ENCODE measurements at regions of chr2 and their contacts with region 1.

Region 1: DNA sequence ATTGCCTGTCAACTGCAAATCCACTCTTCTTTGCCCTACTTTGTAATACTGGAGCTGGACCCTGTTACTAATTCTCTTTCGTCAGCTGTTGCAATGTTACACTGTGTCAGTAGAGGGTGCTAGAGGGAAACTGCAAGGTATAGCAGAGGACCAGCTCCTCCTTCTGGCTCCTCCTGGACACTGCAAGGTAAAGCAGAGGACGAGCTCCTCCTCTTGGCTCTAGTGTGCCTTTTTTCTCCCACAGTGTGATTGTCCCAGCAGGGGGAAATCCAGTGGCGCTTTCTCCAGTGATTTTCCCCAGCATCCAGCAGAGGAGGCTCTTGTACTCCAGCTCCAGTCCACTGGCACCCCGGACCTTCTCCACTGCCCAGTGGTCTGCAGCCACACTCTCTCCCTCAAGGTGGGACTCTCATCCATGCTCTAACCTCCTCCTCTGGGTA is 95.6 kb downstream of the CAPN13 start:
- DNase-seq: peak; percentile 59
- ATAC-seq: peak; percentile 72
- H3K4me3 ChIP-seq: no peak overlapping the region
- H3K27ac ChIP-seq: no peak overlapping the region
- H3K4me1 ChIP-seq: peaks cover 13% of the 10 kb centered on the region
- H3K27me3 ChIP-seq: no peaks in the 10 kb centered on the region
- CTCF ChIP-seq: peak; percentile 100; a peak in 5 of 6 replicates
- EP300 ChIP-seq: no peak
- POLR2A ChIP-seq: no peak
- RAD21 ChIP-seq: peak; percentile 96

Region 2: DNA sequence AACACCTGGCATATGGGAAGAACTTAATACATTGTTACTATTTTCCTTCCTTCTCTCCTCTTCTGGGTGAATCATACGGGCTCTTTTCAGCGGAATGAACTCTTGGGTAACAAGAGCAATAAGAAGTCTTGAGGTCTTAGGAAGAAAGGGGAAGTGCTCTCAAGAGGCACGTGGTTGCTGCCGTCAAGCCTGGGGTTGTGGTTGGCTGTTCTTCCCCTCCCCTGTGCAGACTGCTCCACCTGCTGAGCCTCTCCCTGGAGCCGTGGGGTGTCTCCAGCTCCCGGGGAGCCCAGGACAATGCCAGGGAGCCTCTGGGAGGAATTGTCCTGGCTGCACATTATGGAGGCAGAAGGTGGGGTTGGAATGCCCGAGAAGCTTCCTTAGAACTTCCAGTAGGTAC is 1711.2 kb before region 1 on chr2:
- CTCF ChIA-PET with region 1: no interaction called
- POLR2A ChIA-PET with region 1: no interaction called
- RAD21 ChIA-PET with region 1: no interaction called
- SMC1A ChIA-PET with region 1: no interaction called
- in situ Hi-C with region 1: no loop called
- intact Hi-C with region 1: no loop called
- DNase-seq: peak; percentile 31
- ATAC-seq: peak; percentile 99
- H3K4me3 ChIP-seq: no peak overlapping the region
- H3K27ac ChIP-seq: no peak overlapping the region
- H3K4me1 ChIP-seq: peaks cover 3% of the 10 kb centered on the region; the same call in 1 of the 2 replicates
- H3K27me3 ChIP-seq: no peaks in the 10 kb centered on the region
- CTCF ChIP-seq: 0 out of 6 replicates have a peak, but pooled peaks of 1 of the 3 experiments have one; percentile 11
- EP300 ChIP-seq: peak; percentile 39 to 71; a peak in 3 of 4 replicates
- POLR2A ChIP-seq: no peak
- RAD21 ChIP-seq: no peak

Region 3: DNA sequence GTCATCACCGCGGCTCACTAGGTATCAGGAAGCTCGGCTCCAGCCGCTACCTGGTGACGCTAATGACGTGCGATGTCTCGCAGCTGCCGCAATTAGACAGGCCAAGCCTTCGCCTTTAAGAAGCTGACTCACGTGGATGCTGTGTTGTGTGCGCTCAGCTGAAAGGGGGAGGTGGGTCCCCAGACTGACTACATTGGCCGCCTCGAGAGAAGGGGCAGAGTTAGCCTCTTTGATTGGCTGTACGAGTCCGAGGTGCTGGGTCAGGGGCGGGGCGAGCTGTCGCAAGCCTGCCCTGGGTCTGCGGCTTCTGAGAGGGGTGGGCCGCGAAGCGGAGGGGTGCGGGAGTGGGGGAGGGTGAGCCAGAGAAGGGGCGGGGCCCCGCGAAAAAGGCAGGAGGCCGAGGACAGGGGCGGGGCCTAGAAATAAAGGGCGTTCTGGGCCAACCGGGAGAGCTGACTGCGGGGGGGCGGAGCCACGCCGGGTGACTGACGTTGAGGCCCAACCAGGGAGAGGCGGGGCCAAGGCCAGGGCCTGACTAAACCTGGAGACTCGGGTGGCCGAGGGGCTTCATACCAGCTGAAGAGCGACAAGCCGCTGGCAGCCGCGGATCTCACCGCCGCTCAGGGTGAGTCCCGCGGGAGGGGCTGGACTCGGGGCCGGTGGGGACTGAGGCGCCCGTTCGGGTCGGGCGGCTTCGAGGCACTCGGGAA is 565.1 kb before region 1 on chr2 and contains the start of gene YPEL5:
- CTCF ChIA-PET with region 1: interaction called, 86 read pairs
- POLR2A ChIA-PET with region 1: no interaction called
- RAD21 ChIA-PET with region 1: interaction called, 31 read pairs
- SMC1A ChIA-PET with region 1: interaction called, 32 read pairs
- in situ Hi-C with region 1: no loop called
- intact Hi-C with region 1: no loop called
- DNase-seq: peak; percentile 97
- ATAC-seq: peak; percentile 96
- H3K4me3 ChIP-seq: peak within 1 kb of the TSS; percentile 78
- H3K27ac ChIP-seq: peak within 1 kb of the TSS; percentile 83
- H3K4me1 ChIP-seq: peaks cover 25% of the 10 kb centered on the region
- H3K27me3 ChIP-seq: no peaks in the 10 kb centered on the region
- CTCF ChIP-seq: no peak
- EP300 ChIP-seq: peak in 1 of 2 experiments; percentile 78; a peak in 1 of 4 replicates
- POLR2A ChIP-seq: peak; percentile 82
- RAD21 ChIP-seq: no peak
- polyA plus RNA-seq, gene YPEL5: 24.9 to 43.6 TPM

Region 4: DNA sequence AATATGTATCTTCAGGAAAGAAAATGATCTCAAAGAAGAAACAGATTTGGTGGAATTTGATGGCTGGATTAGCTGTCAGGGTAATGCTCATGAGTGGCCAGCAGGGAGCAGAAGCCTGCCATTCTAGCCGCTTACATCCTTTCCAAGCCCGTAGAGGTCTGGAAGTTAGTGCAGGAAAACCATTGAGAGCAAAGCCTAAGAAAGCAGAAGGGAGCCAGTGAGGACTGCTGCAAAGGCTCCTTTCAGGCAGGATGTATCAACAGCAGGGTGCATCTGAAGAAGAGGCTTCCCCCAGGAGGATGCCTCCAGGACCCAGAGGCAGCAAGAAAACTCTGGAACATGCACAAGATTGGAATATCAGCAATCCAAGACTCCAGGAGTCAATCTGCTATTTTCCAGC is 503.2 kb before region 1 on chr2:
- CTCF ChIA-PET with region 1: interaction called, 334 read pairs
- POLR2A ChIA-PET with region 1: interaction called, 5 read pairs
- RAD21 ChIA-PET with region 1: interaction called, 195 read pairs
- SMC1A ChIA-PET with region 1: interaction called, 137 read pairs
- in situ Hi-C with region 1: loop called (anchors 5 kb)
- intact Hi-C with region 1: loop called (anchors 1 kb)
- DNase-seq: no peak
- ATAC-seq: peak; percentile 82
- H3K4me3 ChIP-seq: no peak overlapping the region
- H3K27ac ChIP-seq: no peak overlapping the region
- H3K4me1 ChIP-seq: peaks cover 2% of the 10 kb centered on the region
- H3K27me3 ChIP-seq: no peaks in the 10 kb centered on the region; a peak in 1 of 4 replicates
- CTCF ChIP-seq: peak; percentile 84 to 90 (median 88)
- EP300 ChIP-seq: no peak
- POLR2A ChIP-seq: no peak
- RAD21 ChIP-seq: peak; percentile 94

Region 5: GRCh38 chr2:30447149-30448045 is 264.3 kb before region 1 on chr2 and contains the start of gene LCLAT1:
- CTCF ChIA-PET with region 1: interaction called, 6 read pairs
- POLR2A ChIA-PET with region 1: no interaction called
- RAD21 ChIA-PET with region 1: interaction called, 5 read pairs
- SMC1A ChIA-PET with region 1: interaction called, 4 read pairs
- in situ Hi-C with region 1: loop called (anchors 5 kb)
- intact Hi-C with region 1: no loop called
- DNase-seq: peak; percentile 44
- ATAC-seq: peak; percentile 95
- H3K4me3 ChIP-seq: peak within 1 kb of the TSS; percentile 93
- H3K27ac ChIP-seq: peak within 1 kb of the TSS; percentile 77
- H3K4me1 ChIP-seq: no peaks in the 10 kb centered on the region; the same call in 1 of the 2 replicates
- H3K27me3 ChIP-seq: no peaks in the 10 kb centered on the region
- CTCF ChIP-seq: no peak; a peak in 1 of 6 replicates
- EP300 ChIP-seq: no peak
- POLR2A ChIP-seq: peak; percentile 84
- RAD21 ChIP-seq: no peak
- polyA plus RNA-seq, gene LCLAT1: 8.1 to 33.0 TPM

Region 6: DNA sequence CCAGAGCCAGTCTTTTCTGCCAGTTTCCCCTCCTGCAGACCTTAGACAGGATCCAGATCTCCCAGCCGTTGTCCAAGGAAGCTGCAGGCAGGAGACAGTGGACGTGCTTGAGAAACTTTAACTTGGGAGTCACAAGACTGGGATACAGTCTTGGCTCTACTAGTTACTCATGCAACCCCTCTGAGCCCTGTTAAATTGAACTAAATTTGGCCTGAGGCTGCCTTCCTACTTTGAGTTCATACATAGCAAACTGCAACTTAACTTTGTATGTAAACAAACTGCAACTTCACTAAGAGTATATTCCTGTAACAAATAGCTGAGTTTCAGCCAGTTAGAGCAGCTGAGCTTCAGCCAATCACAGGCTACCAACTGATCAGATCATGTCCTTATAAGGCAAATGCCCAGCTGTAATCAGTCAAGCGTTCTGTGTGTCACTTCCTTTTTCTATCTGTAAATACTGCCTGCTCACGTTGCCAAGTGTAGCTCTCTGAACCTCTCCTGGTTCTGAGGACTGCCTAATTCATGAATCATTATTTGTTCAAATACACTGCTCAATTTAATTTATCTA is 45.3 kb before region 1 on chr2:
- CTCF ChIA-PET with region 1: interaction called, 10 read pairs
- POLR2A ChIA-PET with region 1: no interaction called
- RAD21 ChIA-PET with region 1: no interaction called
- SMC1A ChIA-PET with region 1: interaction called, 5 read pairs
- in situ Hi-C with region 1: no loop called
- intact Hi-C with region 1: no loop called
- DNase-seq: peak; percentile 32
- ATAC-seq: peak; percentile 95
- H3K4me3 ChIP-seq: no peak overlapping the region
- H3K27ac ChIP-seq: peak overlapping the region; percentile 52
- H3K4me1 ChIP-seq: no peaks in the 10 kb centered on the region
- H3K27me3 ChIP-seq: no peaks in the 10 kb centered on the region
- CTCF ChIP-seq: no peak
- EP300 ChIP-seq: no peak
- POLR2A ChIP-seq: no peak
- RAD21 ChIP-seq: no peak

Region 7: DNA sequence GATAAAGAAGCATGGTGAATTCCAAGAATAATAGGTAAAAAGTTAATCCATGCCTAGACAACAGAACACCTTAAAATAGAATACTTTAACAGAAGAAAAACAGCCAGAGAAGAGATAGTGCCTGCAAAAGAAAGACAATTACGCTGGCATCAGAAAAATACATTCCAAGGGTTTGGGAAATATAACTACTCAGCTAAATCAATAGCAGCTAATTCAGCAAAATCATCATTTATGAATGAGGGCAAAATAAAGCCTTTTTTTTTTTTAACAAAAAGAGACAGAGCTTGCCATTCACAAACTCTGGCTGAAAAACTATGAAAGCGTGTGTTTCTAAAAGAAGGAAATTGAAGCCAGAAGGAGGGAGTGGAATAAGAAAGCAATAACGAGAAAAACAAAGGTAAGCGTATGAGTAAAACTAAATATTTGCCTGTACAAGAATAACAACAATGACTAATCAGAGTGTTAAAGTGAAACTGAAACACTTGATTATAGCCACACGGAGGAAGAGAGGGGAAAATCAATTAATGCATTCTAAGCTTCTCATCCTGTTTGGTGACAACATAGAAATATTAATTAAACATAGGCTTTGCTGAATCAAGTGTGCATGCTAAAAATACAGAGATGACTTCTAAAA is 612.5 kb after region 1 on chr2:
- CTCF ChIA-PET with region 1: interaction called, 138 read pairs
- POLR2A ChIA-PET with region 1: no interaction called
- RAD21 ChIA-PET with region 1: interaction called, 103 read pairs
- SMC1A ChIA-PET with region 1: interaction called, 6 read pairs
- in situ Hi-C with region 1: no loop called
- intact Hi-C with region 1: no loop called
- DNase-seq: peak; percentile 40
- ATAC-seq: peak; percentile 85
- H3K4me3 ChIP-seq: peak overlapping the region; percentile 17; the same call in 1 of the 2 replicates
- H3K27ac ChIP-seq: no peak overlapping the region
- H3K4me1 ChIP-seq: peaks cover 7% of the 10 kb centered on the region; the same call in 1 of the 2 replicates
- H3K27me3 ChIP-seq: no peaks in the 10 kb centered on the region
- CTCF ChIP-seq: no peak
- EP300 ChIP-seq: peak; percentile 36 to 39; a peak in 1 of 4 replicates
- POLR2A ChIP-seq: no peak
- RAD21 ChIP-seq: no peak

Measured in GM12878 (cell line).